KBM-7 (cell line): ENCODE measurements at regions of chrX and their contacts with region 1.

Region 1: DNA sequence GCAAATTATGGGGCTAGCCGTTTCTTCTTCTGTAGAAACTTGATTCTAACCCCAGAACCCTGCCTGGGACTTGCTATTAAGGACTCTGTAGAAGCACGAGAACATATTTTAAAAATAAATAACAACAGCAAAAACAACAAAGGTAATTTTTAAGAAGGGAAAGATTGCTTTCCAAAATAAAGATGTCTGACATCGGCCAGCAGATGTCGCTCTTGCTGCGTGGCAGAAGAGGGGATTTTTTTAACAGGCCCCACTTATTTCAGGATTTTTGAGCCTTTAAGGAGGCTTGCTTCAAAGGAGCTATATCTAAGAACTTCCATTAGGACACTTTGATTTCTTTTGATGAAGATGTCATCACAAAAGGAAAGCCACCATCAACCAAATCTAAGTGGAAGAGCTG is 62.8 kb upstream of the EGFL6 start:
- DNase-seq: peak; percentile 59

Region 2: GRCh38 chrX:13569479-13570260 is 63.1 kb after region 1 on chrX and contains the start of gene EGFL6:
- in situ Hi-C with region 1: no loop called
- DNase-seq: no peak

Region 3: GRCh38 chrX:13646154-13646549 is 139.6 kb after region 1 on chrX:
- in situ Hi-C with region 1: loop called (anchors 25 kb)
- DNase-seq: peak; percentile 69

Region 4: GRCh38 chrX:14029425-14030173 is 523.0 kb after region 1 on chrX and contains the start of gene GEMIN8:
- in situ Hi-C with region 1: loop called (anchors 25 kb)
- DNase-seq: peak; percentile 95